ENCODE measurements at regions of chr4 and their contacts with region 1.

Region 1: DNA sequence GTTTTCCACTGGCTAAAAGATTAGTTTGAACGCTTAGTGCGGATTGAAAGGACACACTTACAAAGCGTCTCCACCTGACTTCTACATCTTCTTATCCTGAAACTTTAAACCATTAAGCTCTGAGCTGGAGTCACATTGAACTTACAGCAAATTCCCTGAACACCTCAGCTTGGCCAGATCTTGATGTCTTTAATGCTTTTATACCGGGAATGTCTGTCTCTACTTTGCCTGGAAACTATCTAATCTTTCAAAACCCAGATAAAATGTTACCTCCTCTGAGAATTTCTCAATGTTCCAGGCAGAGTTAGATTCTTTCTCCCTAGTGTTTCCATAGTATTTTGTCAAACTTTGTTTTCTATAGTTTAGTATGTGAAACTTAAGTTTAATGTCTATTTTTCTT is 179.9 kb downstream of the DTHD1 start:
- DNase-seq: no peak
- H3K4me3 ChIP-seq: no peak overlapping the region
- H3K27ac ChIP-seq: no peak overlapping the region
- H3K4me1 ChIP-seq: no peaks in the 10 kb centered on the region
- H3K27me3 ChIP-seq: no peaks in the 10 kb centered on the region
- CTCF ChIP-seq: no peak
- EP300 ChIP-seq: no peak
- POLR2A ChIP-seq: no peak

Region 2: DNA sequence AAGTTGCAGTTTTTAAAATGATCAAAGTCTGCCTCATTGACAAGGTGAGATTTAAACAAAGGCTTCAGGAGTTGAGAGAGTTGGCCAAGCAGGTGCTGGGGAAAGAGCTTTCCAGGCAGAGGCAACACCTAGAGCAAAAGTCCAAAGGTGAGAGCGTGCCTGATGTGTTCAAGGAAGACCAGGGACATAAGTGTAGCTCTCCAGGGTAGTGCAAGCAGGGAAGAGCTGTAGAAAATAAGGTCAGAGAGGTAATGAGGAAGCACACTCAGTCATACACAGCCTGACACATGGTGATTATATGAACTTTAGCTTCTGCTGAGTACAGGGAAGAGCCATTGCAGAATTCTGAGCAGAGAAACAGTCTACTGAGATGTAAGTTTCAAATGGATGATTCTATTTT is 518.2 kb after region 1 on chr4:
- intact Hi-C with region 1: loop called in 1 of 4 experiments (anchors 5 kb)
- DNase-seq: no peak
- H3K4me3 ChIP-seq: no peak overlapping the region
- H3K27ac ChIP-seq: no peak overlapping the region
- H3K4me1 ChIP-seq: no peaks in the 10 kb centered on the region
- H3K27me3 ChIP-seq: no peaks in the 10 kb centered on the region
- CTCF ChIP-seq: no peak
- EP300 ChIP-seq: no peak
- POLR2A ChIP-seq: no peak

Measured in ovary (tissue), 10 donors.